GM10248 (cell line): ENCODE measurements at regions of chr4 and their contacts with region 1.

Region 1: GRCh38 chr4:48127682-48128394 is 6.2 kb downstream of the TXK start:
- DNase-seq: peak; percentile 67
- CTCF ChIP-seq: peak; percentile 63

Region 2: DNA sequence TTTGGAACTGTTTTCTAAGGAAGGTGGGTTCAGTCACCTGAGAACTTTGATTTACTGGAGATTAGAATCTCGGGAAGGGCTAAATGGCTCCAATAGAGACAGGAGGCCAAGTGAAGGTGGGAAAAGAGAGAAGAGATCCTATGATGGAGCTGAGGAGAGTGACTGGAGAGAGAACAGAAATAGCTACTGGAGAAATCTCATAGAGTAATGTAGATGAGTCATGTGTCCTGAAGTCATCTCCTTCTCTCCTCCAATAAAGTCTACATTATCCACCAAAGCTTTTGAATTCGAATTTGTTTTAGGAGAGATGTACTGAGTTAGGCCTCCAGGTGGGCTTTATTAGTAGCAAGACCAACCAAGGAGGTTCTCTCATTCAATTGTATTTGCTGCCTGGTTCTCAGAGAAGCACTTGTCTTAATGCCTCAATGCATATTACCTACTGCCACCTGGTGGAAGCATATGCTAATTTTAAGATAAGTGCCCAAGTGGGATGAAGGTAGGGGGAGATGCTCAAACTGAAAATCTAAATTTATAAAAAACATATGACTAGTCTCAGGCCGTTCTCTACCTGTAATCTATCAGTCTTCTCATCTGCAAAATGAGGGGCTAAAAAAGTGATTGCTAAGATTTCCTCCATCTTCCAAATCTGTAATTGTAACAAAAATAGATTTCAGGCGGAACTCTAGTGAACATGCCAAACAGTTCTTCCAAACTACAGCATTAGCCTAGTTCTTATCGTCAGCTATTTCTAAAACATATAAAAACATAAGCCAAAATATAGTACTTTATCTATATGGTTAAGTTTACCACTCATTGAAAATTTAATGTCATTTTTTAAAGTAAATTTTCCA is 18.2 kb before region 1 on chr4:
- CTCF ChIA-PET with region 1: interaction called, 11 read pairs
- POLR2A ChIA-PET with region 1: no interaction called
- DNase-seq: peak; percentile 46
- CTCF ChIP-seq: peak; percentile 61

Region 3: GRCh38 chr4:48141048-48141447 is 13.2 kb after region 1 on chr4:
- CTCF ChIA-PET with region 1: interaction called, 44 read pairs
- POLR2A ChIA-PET with region 1: no interaction called
- DNase-seq: peak; percentile 41
- CTCF ChIP-seq: peak; percentile 13

Region 4: GRCh38 chr4:48546336-48546735 is 418.5 kb after region 1 on chr4:
- CTCF ChIA-PET with region 1: interaction called, 13 read pairs
- POLR2A ChIA-PET with region 1: no interaction called
- DNase-seq: no peak
- CTCF ChIP-seq: peak; percentile 51